Ovary (tissue), 10 donors: ENCODE measurements at regions of chr3 and their contacts with region 1.

Region 1: GRCh38 chr3:73624821-73625665 is at the start of gene PDZRN3:
- DNase-seq: peak; percentile 84 to 90 (median 86)
- H3K4me3 ChIP-seq: peak within 1 kb of the TSS; percentile 76
- H3K27ac ChIP-seq: peak within 1 kb of the TSS; percentile 48 to 85
- H3K4me1 ChIP-seq: peaks cover 4% of the 10 kb centered on the region
- H3K27me3 ChIP-seq: no peaks in the 10 kb centered on the region
- CTCF ChIP-seq: no peak
- EP300 ChIP-seq: no peak
- POLR2A ChIP-seq: peak; percentile 83
- total RNA-seq, gene PDZRN3: 68.1 to 161 (median 112) TPM

Region 2: DNA sequence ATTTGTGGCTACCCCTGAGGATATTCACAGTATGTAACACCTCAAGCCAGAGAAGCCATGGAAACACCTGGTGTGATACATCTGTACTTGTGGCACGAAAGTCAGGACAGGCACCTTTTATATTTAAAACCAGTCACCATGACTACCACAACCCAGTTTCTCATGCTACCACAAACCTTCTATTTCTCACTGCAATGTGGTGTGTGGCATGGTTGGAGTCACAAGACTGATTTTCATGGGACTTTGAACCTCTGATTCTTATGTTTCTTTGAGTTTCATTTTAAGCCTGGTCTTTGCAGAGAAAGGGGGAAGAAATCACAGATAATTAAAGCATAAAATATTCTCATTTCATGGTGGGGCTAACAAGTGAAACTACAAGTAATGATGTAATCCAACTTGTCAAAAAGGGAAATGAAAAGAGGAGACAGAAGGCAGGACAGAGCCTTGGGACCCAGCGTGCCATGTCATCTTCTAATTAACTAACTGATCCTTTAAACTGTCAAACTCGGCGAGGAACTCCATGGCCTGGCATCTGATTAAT is 176.2 kb before region 1 on chr3:
- intact Hi-C with region 1: no loop called
- DNase-seq: no peak
- H3K4me3 ChIP-seq: no peak overlapping the region
- H3K27ac ChIP-seq: no peak overlapping the region
- H3K4me1 ChIP-seq: peaks cover 14% of the 10 kb centered on the region
- H3K27me3 ChIP-seq: no peaks in the 10 kb centered on the region
- CTCF ChIP-seq: no peak
- EP300 ChIP-seq: no peak
- POLR2A ChIP-seq: no peak

Region 3: DNA sequence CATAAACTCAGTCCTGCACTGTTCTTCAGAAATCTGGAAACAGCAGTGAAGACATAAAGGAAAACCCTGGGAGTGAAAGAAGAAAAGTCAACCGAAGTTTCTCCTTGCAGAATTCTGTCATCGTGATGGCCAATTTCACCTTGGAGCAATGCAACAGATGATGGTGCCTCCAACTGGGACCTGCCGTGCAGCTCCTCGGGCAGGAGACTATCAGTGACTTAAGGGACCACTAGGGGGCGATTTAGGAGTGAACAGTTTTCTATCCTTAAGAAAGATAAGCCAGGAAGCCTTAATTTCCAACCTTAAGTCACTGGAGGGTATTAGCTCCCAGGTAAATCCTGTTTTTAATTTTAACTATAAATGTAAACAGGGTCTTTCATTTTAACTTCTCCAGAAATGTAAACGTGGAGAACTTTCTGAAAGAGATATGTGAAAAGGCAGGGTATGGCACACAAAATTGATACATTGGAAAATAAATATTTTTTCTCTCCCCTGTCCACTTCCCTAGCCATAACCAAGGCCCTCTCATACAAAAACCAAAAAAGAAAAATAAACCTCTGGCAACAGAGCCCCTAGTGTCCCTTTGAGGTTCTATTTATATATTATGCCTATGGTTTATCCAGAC is 116.6 kb before region 1 on chr3:
- intact Hi-C with region 1: loop called in 3 of 4 experiments (anchors 5 to 10 kb)
- DNase-seq: peak in 2 of 5 donors; percentile 44 to 71
- H3K4me3 ChIP-seq: no peak overlapping the region
- H3K27ac ChIP-seq: peak overlapping the region in 1 of 2 donors; percentile 68
- H3K4me1 ChIP-seq: peaks cover 28% of the 10 kb centered on the region
- H3K27me3 ChIP-seq: no peaks in the 10 kb centered on the region
- CTCF ChIP-seq: peak; percentile 20 to 66 (median 46)
- EP300 ChIP-seq: no peak
- POLR2A ChIP-seq: no peak

Region 4: GRCh38 chr3:73766599-73767381 is 141.7 kb after region 1 on chr3:
- intact Hi-C with region 1: loop called in 2 of 4 experiments (anchors 2 to 5 kb)
- DNase-seq: peak in 3 of 5 donors; percentile 32 to 55 (median 51)
- H3K4me3 ChIP-seq: peak overlapping the region; percentile 21
- H3K27ac ChIP-seq: peak overlapping the region; percentile 70
- H3K4me1 ChIP-seq: peaks cover 2% of the 10 kb centered on the region
- H3K27me3 ChIP-seq: no peaks in the 10 kb centered on the region
- CTCF ChIP-seq: no peak
- EP300 ChIP-seq: no peak
- POLR2A ChIP-seq: no peak

Region 5: GRCh38 chr3:73848173-73848906 is 223.3 kb after region 1 on chr3:
- intact Hi-C with region 1: loop called in 3 of 4 experiments (anchors 10 kb)
- DNase-seq: no peak
- H3K4me3 ChIP-seq: no peak overlapping the region
- H3K27ac ChIP-seq: no peak overlapping the region
- H3K4me1 ChIP-seq: no peaks in the 10 kb centered on the region
- H3K27me3 ChIP-seq: no peaks in the 10 kb centered on the region
- CTCF ChIP-seq: peak; percentile 42 to 75 (median 71)
- EP300 ChIP-seq: no peak
- POLR2A ChIP-seq: no peak